HepG2 (cell line): ENCODE measurements at regions of chr1 and their contacts with region 1.

Region 1: DNA sequence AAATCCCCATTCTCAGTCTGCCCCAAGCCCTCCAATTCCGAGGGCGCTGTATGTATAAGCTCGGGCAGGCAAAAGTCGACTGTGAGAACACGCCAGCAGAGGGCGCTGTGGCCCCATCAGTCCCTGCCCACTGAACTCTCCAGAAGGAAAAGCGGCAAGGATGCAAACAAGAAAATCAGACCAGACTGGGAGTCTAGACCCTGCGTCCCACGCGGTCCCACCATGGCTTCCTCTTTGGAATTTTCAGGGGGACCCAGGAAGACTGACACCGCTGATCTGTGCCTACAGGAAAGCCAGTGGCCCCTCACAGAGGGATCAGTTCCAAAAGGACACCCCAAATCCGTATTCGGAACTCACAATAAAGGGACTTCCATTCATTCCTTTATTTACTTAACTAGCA is 19.5 kb downstream of the TEX35 start:
- DNase-seq: peak; percentile 57
- ATAC-seq: peak; percentile 73
- H3K4me3 ChIP-seq: peak overlapping the region; percentile 32 to 65 (median 44); a peak in 5 of 6 replicates
- H3K27ac ChIP-seq: no peak overlapping the region
- H3K4me1 ChIP-seq: peaks cover 57% of the 10 kb centered on the region
- H3K27me3 ChIP-seq: peaks cover 0 to 10% of the 10 kb centered on the region in 2 experiments; a peak in 1 of 5 replicates
- CTCF ChIP-seq: peak; percentile 96
- EP300 ChIP-seq: no peak
- POLR2A ChIP-seq: no peak
- RAD21 ChIP-seq: peak; percentile 89

Region 2: DNA sequence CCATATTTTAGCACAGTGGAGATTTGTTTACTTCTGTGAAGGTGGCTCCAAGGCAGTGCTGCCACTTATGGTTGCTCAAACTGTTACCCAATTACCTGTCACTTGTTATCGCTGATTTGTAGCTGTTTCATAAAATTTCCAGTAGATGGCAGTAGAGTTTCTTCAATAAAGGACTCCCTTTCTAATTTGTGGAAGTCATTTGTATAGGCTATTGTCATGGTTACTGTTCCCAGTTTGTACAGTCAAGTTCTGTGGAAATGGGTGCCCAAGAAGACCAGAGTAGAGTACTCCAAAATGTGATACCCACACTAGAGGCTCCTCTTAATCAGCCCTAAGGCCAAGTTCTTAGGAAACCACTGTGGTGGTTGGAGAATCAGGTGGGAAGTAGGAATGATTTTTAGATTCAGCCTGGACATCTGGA is 221.7 kb before region 1 on chr1:
- CTCF ChIA-PET with region 1: interaction called, 8 read pairs
- POLR2A ChIA-PET with region 1: no interaction called
- in situ Hi-C with region 1: loop called (anchors 5 kb)
- intact Hi-C with region 1: loop called (anchors 2 kb)
- DNase-seq: peak; percentile 77
- ATAC-seq: peak; percentile 83
- H3K4me3 ChIP-seq: no peak overlapping the region
- H3K27ac ChIP-seq: no peak overlapping the region
- H3K4me1 ChIP-seq: no peaks in the 10 kb centered on the region
- H3K27me3 ChIP-seq: no peaks in the 10 kb centered on the region
- CTCF ChIP-seq: peak; percentile 80
- EP300 ChIP-seq: no peak
- POLR2A ChIP-seq: no peak
- RAD21 ChIP-seq: peak; percentile 51; the same call in 1 of the 2 replicates

Region 3: DNA sequence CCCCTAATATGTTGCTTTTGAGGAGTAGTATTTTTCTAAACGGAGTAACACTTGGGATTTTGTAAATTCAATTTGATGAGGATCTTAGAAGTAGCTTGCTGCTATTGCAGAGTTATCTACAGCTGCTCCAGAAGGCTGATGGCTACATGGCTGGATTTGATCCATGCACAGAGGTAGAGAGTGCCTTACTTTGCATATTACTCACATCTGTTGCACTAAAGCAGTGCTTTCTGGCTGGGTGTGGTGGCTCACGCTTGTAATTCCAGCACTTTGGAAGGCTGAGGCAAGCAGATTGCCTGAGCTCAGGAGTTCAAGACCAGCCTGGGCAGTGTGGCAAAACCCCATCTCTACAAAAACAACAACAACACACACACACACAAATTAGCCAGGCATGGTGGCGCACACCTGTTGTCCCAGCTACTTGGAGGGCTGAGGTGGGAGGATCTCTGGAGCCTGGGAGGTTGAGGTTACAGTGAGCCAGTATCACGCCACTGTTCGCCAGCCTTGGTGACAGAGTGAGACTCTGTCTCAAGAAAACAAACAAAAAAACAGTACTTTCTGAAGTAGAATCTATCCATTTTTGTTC is 217.3 kb after region 1 on chr1:
- CTCF ChIA-PET with region 1: interaction called, 13 read pairs
- POLR2A ChIA-PET with region 1: no interaction called
- in situ Hi-C with region 1: loop called (anchors 5 kb)
- intact Hi-C with region 1: loop called (anchors 1 kb)
- DNase-seq: no peak
- ATAC-seq: no peak
- H3K4me3 ChIP-seq: no peak overlapping the region
- H3K27ac ChIP-seq: no peak overlapping the region
- H3K4me1 ChIP-seq: peaks cover 31% of the 10 kb centered on the region
- H3K27me3 ChIP-seq: no peaks in the 10 kb centered on the region
- CTCF ChIP-seq: no peak
- EP300 ChIP-seq: no peak
- POLR2A ChIP-seq: no peak
- RAD21 ChIP-seq: no peak

Region 4: GRCh38 chr1:178784131-178784536 is 251.7 kb after region 1 on chr1:
- CTCF ChIA-PET with region 1: no interaction called
- POLR2A ChIA-PET with region 1: no interaction called
- in situ Hi-C with region 1: no loop called
- intact Hi-C with region 1: loop called (anchors 10 kb)
- DNase-seq: no peak
- ATAC-seq: no peak
- H3K4me3 ChIP-seq: no peak overlapping the region
- H3K27ac ChIP-seq: no peak overlapping the region
- H3K4me1 ChIP-seq: no peaks in the 10 kb centered on the region
- H3K27me3 ChIP-seq: no peaks in the 10 kb centered on the region
- CTCF ChIP-seq: no peak
- EP300 ChIP-seq: no peak
- POLR2A ChIP-seq: no peak
- RAD21 ChIP-seq: no peak